Common myeloid progenitor, CD34-positive (primary cell): ENCODE measurements at regions of chr16 and their contacts with region 1.

Region 1: DNA sequence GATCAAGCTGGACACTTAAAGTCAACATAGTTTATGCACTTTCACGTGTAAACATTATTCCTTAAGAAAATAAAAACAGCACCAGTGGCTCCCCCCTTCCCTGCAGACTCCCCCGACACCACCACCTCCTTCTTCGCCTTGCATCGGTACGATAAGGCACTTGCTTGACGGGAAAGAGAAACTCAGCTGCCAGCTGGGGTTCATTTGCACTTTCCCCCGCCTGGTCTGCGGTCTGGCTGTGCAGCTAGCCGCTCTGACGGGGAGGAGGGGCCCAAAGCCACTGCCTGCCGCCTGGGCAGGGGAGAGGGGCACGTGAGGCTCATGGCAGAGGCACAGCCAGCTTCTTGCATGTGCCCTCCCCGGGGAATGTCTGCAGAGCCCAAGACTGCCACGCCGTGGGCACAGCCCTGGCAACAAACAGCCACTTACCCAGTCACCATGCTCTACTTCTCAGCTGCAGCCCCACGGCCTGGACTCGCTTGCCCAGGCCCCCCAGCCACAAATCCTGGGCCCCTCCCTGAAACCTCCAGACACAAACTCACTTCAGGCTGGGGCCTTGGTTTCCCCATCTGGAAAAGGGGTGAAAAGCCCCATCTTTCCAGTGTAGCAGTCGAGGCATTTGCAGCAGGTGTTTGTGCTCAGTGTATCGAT is 16.5 kb upstream of the PRM1 start:
- DNase-seq: peak; percentile 96 to 99 (median 98)
- H3K4me3 ChIP-seq: peak overlapping the region in 4 of 7 experiments; percentile 8 to 49 (median 24)
- H3K27ac ChIP-seq: no peak overlapping the region
- H3K4me1 ChIP-seq: peaks cover 5 to 36% (median 30%) of the 10 kb centered on the region in 4 experiments
- H3K27me3 ChIP-seq: no peaks in the 10 kb centered on the region

Region 2: GRCh38 chr16:11310997-11311561 is 13.5 kb after region 1 on chr16:
- CTCF ChIA-PET with region 1: interaction called, 13 read pairs
- POLR2A ChIA-PET with region 1: interaction called, 3 read pairs
- DNase-seq: peak; percentile 79 to 94 (median 92)
- H3K4me3 ChIP-seq: peak overlapping the region in 1 of 7 experiments; percentile 40
- H3K27ac ChIP-seq: no peak overlapping the region
- H3K4me1 ChIP-seq: peaks cover 7 to 48% (median 38%) of the 10 kb centered on the region in 4 experiments
- H3K27me3 ChIP-seq: no peaks in the 10 kb centered on the region